CD4-positive, alpha-beta memory T cell (primary cell): ENCODE measurements at regions of chr17 and their contacts with region 1.

Region 1: GRCh38 chr17:64020056-64020766 is at the start of gene ICAM2:
- DNase-seq: peak; percentile 94 to 99 (median 97)
- H3K4me3 ChIP-seq: peak within 1 kb of the TSS; percentile 93 to 96
- H3K4me3 Mint-ChIP-seq: peak within 1 kb of the TSS; percentile 97 to 100 (median 99)
- H3K27ac ChIP-seq: peak within 1 kb of the TSS; percentile 93
- H3K27ac Mint-ChIP-seq: peak within 1 kb of the TSS; percentile 99 to 100 (median 100)
- H3K4me1 ChIP-seq: peaks cover 71% of the 10 kb centered on the region
- H3K4me1 Mint-ChIP-seq: peaks cover 51 to 85% (median 63%) of the 10 kb centered on the region in 4 donors
- H3K27me3 ChIP-seq: no peaks in the 10 kb centered on the region
- H3K27me3 Mint-ChIP-seq: peaks cover 0 to 1% of the 10 kb centered on the region in 2 donors
- total RNA-seq, gene ICAM2: 150 to 158 TPM

Region 2: DNA sequence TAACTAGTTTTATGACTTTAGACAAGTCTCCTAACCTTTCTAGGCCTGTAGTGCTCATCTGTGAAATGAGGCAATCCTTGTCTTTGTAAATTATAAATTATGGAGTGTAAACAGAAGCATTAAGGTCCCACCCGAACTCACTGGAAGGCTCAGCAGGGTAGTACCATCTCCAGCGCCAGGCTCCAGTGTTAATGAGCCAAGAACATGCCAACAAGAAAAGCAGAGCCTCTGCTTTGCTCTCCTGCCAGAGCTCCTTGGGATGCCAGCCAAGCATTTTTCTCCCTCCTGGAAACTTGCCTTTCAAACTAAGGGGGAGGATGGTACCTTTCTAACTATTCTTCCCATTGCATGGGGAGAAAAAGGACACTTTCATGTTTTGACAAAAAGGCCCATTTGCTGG is 335.2 kb before region 1 on chr17:
- CTCF ChIA-PET with region 1: no interaction called
- POLR2A ChIA-PET with region 1: no interaction called
- intact Hi-C with region 1: no loop called
- DNase-seq: no peak
- H3K4me3 ChIP-seq: no peak overlapping the region
- H3K4me3 Mint-ChIP-seq: no peak overlapping the region
- H3K27ac ChIP-seq: no peak overlapping the region
- H3K27ac Mint-ChIP-seq: peak overlapping the region in 3 of 7 donors; percentile 32 to 80 (median 53)
- H3K4me1 ChIP-seq: no peaks in the 10 kb centered on the region
- H3K4me1 Mint-ChIP-seq: peaks cover 0 to 9% (median 1%) of the 10 kb centered on the region in 4 donors
- H3K27me3 ChIP-seq: no peaks in the 10 kb centered on the region
- H3K27me3 Mint-ChIP-seq: no peaks in the 10 kb centered on the region

Region 3: GRCh38 chr17:63919311-63919723 is 100.9 kb before region 1 on chr17:
- CTCF ChIA-PET with region 1: interaction called, 351 read pairs
- POLR2A ChIA-PET with region 1: interaction called, 46 read pairs
- intact Hi-C with region 1: loop called (anchors 1 kb)
- DNase-seq: peak; percentile 70 to 81 (median 75)
- H3K4me3 ChIP-seq: no peak overlapping the region
- H3K4me3 Mint-ChIP-seq: no peak overlapping the region
- H3K27ac ChIP-seq: no peak overlapping the region
- H3K27ac Mint-ChIP-seq: peak overlapping the region in 6 of 7 donors; percentile 38 to 87 (median 62)
- H3K4me1 ChIP-seq: peaks cover 7% of the 10 kb centered on the region
- H3K4me1 Mint-ChIP-seq: peaks cover 6% of the 10 kb centered on the region in 4 donors
- H3K27me3 ChIP-seq: no peaks in the 10 kb centered on the region
- H3K27me3 Mint-ChIP-seq: peaks cover 0 to 2% of the 10 kb centered on the region in 2 donors

Region 4: GRCh38 chr17:63946440-63947367 is 73.5 kb before region 1 on chr17:
- CTCF ChIA-PET with region 1: interaction called, 60 read pairs
- POLR2A ChIA-PET with region 1: interaction called, 26 read pairs
- intact Hi-C with region 1: loop called (anchors 1 kb)
- DNase-seq: peak; percentile 59 to 69 (median 64)
- H3K4me3 ChIP-seq: peak overlapping the region; percentile 6 to 31
- H3K4me3 Mint-ChIP-seq: peak overlapping the region; percentile 41 to 87 (median 78)
- H3K27ac ChIP-seq: no peak overlapping the region
- H3K27ac Mint-ChIP-seq: peak overlapping the region in 6 of 7 donors; percentile 57 to 88 (median 71)
- H3K4me1 ChIP-seq: peaks cover 22% of the 10 kb centered on the region
- H3K4me1 Mint-ChIP-seq: peaks cover 4 to 31% (median 19%) of the 10 kb centered on the region in 4 donors
- H3K27me3 ChIP-seq: no peaks in the 10 kb centered on the region
- H3K27me3 Mint-ChIP-seq: no peaks in the 10 kb centered on the region

Region 5: GRCh38 chr17:63998050-63998720 is 22.0 kb before region 1 on chr17 and contains the start of gene PRR29:
- CTCF ChIA-PET with region 1: interaction called, 556 read pairs
- POLR2A ChIA-PET with region 1: interaction called, 587 read pairs
- intact Hi-C with region 1: loop called (anchors 1 kb)
- DNase-seq: peak; percentile 70 to 81 (median 75)
- H3K4me3 ChIP-seq: peak within 1 kb of the TSS; percentile 5 to 76
- H3K4me3 Mint-ChIP-seq: peak within 1 kb of the TSS; percentile 87 to 94 (median 88)
- H3K27ac ChIP-seq: peak within 1 kb of the TSS; percentile 39
- H3K27ac Mint-ChIP-seq: peak within 1 kb of the TSS; percentile 60 to 91 (median 87)
- H3K4me1 ChIP-seq: peaks cover 46% of the 10 kb centered on the region
- H3K4me1 Mint-ChIP-seq: peaks cover 32 to 69% (median 42%) of the 10 kb centered on the region in 4 donors
- H3K27me3 ChIP-seq: no peaks in the 10 kb centered on the region
- H3K27me3 Mint-ChIP-seq: no peaks in the 10 kb centered on the region
- total RNA-seq, gene PRR29: 0.19 to 1.0 TPM

Region 6: GRCh38 chr17:64051153-64051552 is 30.9 kb after region 1 on chr17:
- CTCF ChIA-PET with region 1: interaction called, 18 read pairs
- POLR2A ChIA-PET with region 1: interaction called, 37 read pairs
- intact Hi-C with region 1: no loop called
- DNase-seq: peak; percentile 50 to 84 (median 73)
- H3K4me3 ChIP-seq: no peak overlapping the region
- H3K4me3 Mint-ChIP-seq: peak overlapping the region in 7 of 8 donors; percentile 37 to 78 (median 68)
- H3K27ac ChIP-seq: peak overlapping the region; percentile 52
- H3K27ac Mint-ChIP-seq: peak overlapping the region; percentile 69 to 96 (median 91)
- H3K4me1 ChIP-seq: peaks cover 56% of the 10 kb centered on the region
- H3K4me1 Mint-ChIP-seq: peaks cover 35 to 76% (median 54%) of the 10 kb centered on the region in 4 donors
- H3K27me3 ChIP-seq: no peaks in the 10 kb centered on the region
- H3K27me3 Mint-ChIP-seq: no peaks in the 10 kb centered on the region

Region 7: DNA sequence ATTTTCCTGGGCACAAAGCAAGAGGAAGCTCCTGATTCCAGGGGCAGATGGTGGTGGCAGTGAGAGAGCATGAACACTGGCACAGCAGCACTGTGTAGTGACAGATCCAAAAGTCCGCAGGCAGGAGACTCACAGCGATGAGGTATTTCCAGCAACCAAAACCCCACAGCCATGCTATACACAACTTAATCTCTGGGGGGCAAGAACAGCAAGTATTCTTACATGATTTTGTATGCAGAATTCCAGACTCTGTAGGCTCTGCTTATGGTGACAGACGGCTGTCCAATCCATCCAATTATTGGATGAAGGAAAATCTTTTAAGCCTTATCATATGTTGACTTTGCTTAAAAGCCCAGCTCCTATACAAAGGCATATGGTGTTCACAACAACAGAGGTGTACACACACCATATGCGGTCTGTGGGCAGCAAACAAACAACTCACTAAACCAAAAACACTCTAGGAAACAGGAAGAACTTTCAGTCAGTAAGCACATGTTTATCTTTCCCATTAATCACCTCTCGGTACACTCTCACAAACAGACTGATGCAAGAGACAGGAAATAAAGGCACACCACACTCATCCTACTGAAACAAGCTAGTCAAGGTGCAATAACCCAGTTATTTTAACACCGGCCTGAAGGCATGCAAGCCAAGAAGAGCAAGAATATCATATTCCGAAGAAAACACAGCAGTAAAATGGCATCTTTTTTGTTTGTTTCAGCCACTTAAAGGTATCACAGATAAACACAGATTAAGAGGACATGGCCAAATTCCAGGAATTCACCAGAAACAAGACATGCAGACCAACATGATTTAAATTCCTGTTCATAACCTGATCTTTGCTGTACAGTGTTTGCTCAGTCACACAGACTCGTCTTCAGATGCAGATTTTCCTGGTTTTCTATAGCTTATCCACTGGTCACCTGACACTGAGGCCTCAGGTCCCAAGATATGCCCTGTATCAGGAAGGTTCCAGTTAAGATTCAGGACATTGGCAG is 61.9 kb after region 1 on chr17:
- CTCF ChIA-PET with region 1: interaction called, 3 read pairs
- POLR2A ChIA-PET with region 1: interaction called, 19 read pairs
- intact Hi-C with region 1: no loop called
- DNase-seq: peak; percentile 63 to 83 (median 75)
- H3K4me3 ChIP-seq: peak overlapping the region; percentile 4 to 21
- H3K4me3 Mint-ChIP-seq: peak overlapping the region in 5 of 8 donors; percentile 54 to 86 (median 80)
- H3K27ac ChIP-seq: peak overlapping the region; percentile 31
- H3K27ac Mint-ChIP-seq: peak overlapping the region in 1 of 7 donors; percentile 71
- H3K4me1 ChIP-seq: peaks cover 78% of the 10 kb centered on the region
- H3K4me1 Mint-ChIP-seq: peaks cover 18 to 34% (median 31%) of the 10 kb centered on the region in 4 donors
- H3K27me3 ChIP-seq: no peaks in the 10 kb centered on the region
- H3K27me3 Mint-ChIP-seq: no peaks in the 10 kb centered on the region

Region 8: GRCh38 chr17:64496786-64497564 is 476.8 kb after region 1 on chr17 and contains the start of gene POLG2:
- CTCF ChIA-PET with region 1: no interaction called
- POLR2A ChIA-PET with region 1: no interaction called
- intact Hi-C with region 1: loop called (anchors 5 kb)
- DNase-seq: peak; percentile 95 to 96 (median 95)
- H3K4me3 ChIP-seq: peak within 1 kb of the TSS; percentile 90 to 93
- H3K4me3 Mint-ChIP-seq: peak within 1 kb of the TSS; percentile 100
- H3K27ac ChIP-seq: peak within 1 kb of the TSS; percentile 79
- H3K27ac Mint-ChIP-seq: peak within 1 kb of the TSS; percentile 98 to 100 (median 99)
- H3K4me1 ChIP-seq: peaks cover 80% of the 10 kb centered on the region
- H3K4me1 Mint-ChIP-seq: peaks cover 50 to 91% (median 67%) of the 10 kb centered on the region in 4 donors
- H3K27me3 ChIP-seq: no peaks in the 10 kb centered on the region
- H3K27me3 Mint-ChIP-seq: no peaks in the 10 kb centered on the region
- total RNA-seq, gene POLG2: 57.4 to 60.0 TPM

Region 9: GRCh38 chr17:64765191-64765958 is 745.2 kb after region 1 on chr17:
- CTCF ChIA-PET with region 1: no interaction called
- POLR2A ChIA-PET with region 1: no interaction called
- intact Hi-C with region 1: no loop called
- DNase-seq: no peak
- H3K4me3 ChIP-seq: no peak overlapping the region
- H3K4me3 Mint-ChIP-seq: no peak overlapping the region
- H3K27ac ChIP-seq: no peak overlapping the region
- H3K27ac Mint-ChIP-seq: peak overlapping the region in 3 of 7 donors; percentile 6 to 53 (median 9)
- H3K4me1 ChIP-seq: no peaks in the 10 kb centered on the region
- H3K4me1 Mint-ChIP-seq: peaks cover 0 to 13% (median 2%) of the 10 kb centered on the region in 4 donors
- H3K27me3 ChIP-seq: no peaks in the 10 kb centered on the region
- H3K27me3 Mint-ChIP-seq: no peaks in the 10 kb centered on the region